A673 (cell line): ENCODE measurements at regions of chr1 and their contacts with region 1.

Region 1: DNA sequence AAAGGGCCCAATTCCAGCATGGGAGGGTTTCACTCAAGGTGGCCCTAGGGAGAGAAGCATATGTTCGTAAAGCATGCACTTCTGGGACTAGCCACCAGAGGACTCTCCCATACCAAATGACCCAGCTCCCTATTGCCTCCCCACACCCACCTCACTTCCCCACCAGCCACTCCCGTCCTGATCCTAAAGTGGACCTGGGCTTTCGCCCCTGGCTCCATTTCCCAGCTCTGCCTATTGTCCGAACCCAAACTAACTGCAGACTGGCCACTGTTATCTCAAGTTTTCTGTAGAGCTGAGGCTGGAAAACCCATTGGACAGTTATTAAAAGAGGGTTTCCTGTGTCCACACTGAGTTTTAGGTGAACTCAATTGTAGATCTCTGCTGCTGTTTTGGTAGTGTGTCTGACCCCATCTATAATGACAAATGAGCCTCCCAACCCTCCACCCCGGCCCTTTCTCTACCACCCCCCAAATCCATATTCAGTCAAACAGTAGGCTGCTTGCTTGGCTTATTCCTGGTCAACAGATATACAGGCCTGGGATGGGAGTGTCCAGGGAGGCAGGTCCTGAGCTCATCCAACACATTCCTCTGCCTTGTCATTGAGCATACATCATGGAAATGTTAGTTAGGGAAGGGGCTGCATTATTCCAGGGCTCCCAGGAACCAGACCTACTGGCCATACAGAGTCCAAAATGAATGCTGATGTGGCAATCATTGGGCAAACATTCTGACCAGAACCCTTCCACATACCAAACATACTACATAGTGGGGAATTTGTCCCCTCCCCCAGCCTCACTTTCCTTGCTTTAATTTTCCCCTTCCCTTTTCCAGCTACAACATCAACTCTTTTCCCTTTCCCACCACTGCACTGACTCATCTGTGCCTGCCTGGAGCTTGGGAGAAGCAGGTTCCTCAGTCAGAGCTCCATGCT is 59.2 kb downstream of the ABCA4 start:
- DNase-seq: peak; percentile 78
- H3K4me3 ChIP-seq: no peak overlapping the region
- H3K27ac ChIP-seq: no peak overlapping the region
- H3K4me1 ChIP-seq: no peaks in the 10 kb centered on the region
- H3K27me3 ChIP-seq: no peaks in the 10 kb centered on the region
- CTCF ChIP-seq: peak; percentile 85

Region 2: DNA sequence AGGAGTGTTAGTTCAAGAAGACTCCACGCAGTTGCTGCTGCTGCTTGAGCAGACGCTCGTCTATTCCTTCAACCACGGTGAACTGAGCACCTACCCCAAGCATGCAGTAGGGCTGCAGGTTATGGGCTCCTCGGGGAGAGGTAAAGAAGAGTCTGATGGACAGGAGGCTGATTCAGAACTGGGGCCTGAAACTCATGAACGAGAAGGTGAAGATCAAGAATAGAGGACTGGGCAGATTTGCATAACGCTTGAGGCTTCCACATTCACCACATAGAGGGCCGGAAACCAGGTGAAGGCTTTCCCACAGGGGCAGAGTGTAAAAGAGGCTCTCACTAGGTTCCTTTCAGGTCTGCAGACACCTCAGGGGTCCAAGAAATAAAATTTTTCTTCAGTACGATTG is 50.1 kb after region 1 on chr1:
- CTCF ChIA-PET with region 1: no interaction called
- POLR2A ChIA-PET with region 1: no interaction called
- intact Hi-C with region 1: no loop called
- DNase-seq: no peak
- H3K4me3 ChIP-seq: no peak overlapping the region
- H3K27ac ChIP-seq: no peak overlapping the region
- H3K4me1 ChIP-seq: peaks cover 12% of the 10 kb centered on the region
- H3K27me3 ChIP-seq: no peaks in the 10 kb centered on the region
- CTCF ChIP-seq: no peak

Region 3: DNA sequence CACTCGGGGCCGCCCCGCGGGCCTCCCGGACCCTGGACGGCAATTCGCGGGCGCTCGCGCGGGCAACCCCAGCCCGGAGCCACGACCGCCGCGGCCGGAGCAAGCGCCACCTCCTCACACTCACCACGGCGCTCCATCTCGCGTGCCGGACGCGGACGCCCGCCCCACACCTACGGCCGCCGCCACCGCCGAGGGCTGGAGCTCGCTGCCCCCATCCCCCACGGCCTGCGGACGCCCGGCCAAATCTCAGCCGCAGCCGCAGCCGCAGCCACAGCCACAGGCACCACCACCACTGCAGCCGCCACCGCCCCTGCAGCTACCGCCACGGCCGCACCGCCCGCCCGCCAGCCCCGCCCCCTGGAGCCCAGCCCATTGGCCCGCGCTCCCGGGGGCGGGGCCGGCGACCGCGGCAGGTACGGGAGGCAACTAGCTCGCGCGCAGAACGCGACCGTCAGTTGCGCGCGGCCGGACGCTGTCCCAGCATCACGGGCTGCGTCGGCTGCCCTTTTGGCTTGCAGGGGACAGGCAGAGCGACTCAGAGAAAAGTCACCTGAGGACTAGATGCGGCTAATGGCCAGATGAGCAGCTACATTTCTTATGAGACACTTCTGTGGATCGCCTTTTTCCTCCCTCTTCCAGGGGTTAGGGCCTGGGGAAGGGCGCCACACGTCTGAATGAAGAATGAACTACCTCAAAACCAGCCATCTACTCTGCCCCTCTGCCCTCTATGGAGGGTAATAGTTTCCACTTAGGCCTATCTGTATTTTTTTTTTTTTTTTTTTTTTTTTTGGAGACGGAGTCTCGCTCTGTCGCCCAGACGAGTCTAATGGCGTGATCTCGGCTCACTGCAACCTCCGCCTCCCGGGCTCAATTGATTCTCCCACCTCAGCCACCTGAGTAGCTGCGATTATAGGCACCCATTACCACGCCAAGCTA is 175.8 kb after region 1 on chr1 and contains the start of gene ARHGAP29:
- CTCF ChIA-PET with region 1: interaction called, 5 read pairs
- POLR2A ChIA-PET with region 1: no interaction called
- intact Hi-C with region 1: loop called (anchors 1 kb)
- DNase-seq: peak; percentile 87
- H3K4me3 ChIP-seq: peak within 1 kb of the TSS; percentile 63
- H3K27ac ChIP-seq: no peak within 1 kb of the TSS
- H3K4me1 ChIP-seq: no peaks in the 10 kb centered on the region
- H3K27me3 ChIP-seq: peaks cover 67% of the 10 kb centered on the region
- CTCF ChIP-seq: peak; percentile 23; the same call in 1 of the 2 replicates
- total RNA-seq, gene ARHGAP29: 1.7 and 1.8 TPM in 2 replicates

Region 4: GRCh38 chr1:94329986-94330385 is 268.2 kb after region 1 on chr1:
- CTCF ChIA-PET with region 1: interaction called, 54 read pairs
- POLR2A ChIA-PET with region 1: no interaction called
- intact Hi-C with region 1: loop called (anchors 1 kb)
- DNase-seq: peak; percentile 61
- H3K4me3 ChIP-seq: no peak overlapping the region
- H3K27ac ChIP-seq: no peak overlapping the region
- H3K4me1 ChIP-seq: peaks cover 20% of the 10 kb centered on the region
- H3K27me3 ChIP-seq: no peaks in the 10 kb centered on the region
- CTCF ChIP-seq: peak; percentile 58